ENCODE measurements at regions of chr2 and their contacts with region 1.

Region 1: GRCh38 chr2:231612179-231613053 is 19.8 kb downstream of the TEX44 start:
- DNase-seq: peak; percentile 91
- H3K4me3 ChIP-seq: peak overlapping the region; percentile 60
- H3K27ac ChIP-seq: peak overlapping the region; percentile 99
- H3K4me1 ChIP-seq: peaks cover 73% of the 10 kb centered on the region
- CTCF ChIP-seq: peak; percentile 98

Region 2: DNA sequence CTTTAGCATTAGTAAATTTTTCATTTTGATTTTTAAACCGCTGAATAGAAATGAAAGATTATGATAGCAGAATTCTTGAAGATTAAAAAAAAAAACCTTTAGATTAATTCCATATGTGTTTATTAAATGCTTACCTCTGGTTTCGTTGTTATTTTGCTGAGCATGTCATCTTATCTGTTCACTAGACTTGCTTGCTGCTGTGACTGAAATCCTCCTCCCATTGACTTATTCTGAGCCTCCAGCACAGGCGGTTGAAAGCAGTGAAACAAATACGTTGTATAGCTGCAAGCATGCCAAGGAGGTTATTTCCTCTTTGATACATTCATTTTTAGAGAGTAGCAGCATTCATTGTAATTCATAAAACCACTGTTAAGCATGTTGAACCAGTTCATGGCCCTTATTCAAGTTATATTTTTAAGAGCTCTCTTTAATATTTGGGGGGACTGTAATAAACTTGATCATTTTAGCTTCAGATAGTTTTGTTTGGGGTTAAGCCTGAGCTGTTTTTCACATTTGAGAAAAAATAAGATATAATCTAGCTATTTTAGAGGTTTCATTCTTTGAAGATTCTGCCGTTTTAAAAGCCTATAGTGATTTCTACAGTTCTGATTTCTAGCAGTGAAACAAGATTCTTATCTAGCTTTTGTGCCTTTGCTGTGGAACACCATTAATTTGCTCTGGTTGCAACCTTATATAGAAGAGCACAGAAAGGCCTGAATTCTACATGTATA is 487.4 kb before region 1 on chr2 and contains the start of gene HTR2B:
- CTCF ChIA-PET with region 1: no interaction called
- POLR2A ChIA-PET with region 1: no interaction called
- intact Hi-C with region 1: no loop called
- DNase-seq: no peak
- H3K4me3 ChIP-seq: no peak within 1 kb of the TSS
- H3K27ac ChIP-seq: no peak within 1 kb of the TSS
- H3K4me1 ChIP-seq: no peaks in the 10 kb centered on the region
- CTCF ChIP-seq: no peak
- total RNA-seq, gene HTR2B: not detected in 2 replicates

Region 3: GRCh38 chr2:231648587-231649174 is 36.3 kb after region 1 on chr2:
- CTCF ChIA-PET with region 1: no interaction called
- POLR2A ChIA-PET with region 1: interaction called, 4 read pairs
- intact Hi-C with region 1: loop called (anchors 1 kb)
- DNase-seq: peak; percentile 81
- H3K4me3 ChIP-seq: no peak overlapping the region
- H3K27ac ChIP-seq: no peak overlapping the region
- H3K4me1 ChIP-seq: peaks cover 26% of the 10 kb centered on the region
- CTCF ChIP-seq: peak; percentile 81

Region 4: DNA sequence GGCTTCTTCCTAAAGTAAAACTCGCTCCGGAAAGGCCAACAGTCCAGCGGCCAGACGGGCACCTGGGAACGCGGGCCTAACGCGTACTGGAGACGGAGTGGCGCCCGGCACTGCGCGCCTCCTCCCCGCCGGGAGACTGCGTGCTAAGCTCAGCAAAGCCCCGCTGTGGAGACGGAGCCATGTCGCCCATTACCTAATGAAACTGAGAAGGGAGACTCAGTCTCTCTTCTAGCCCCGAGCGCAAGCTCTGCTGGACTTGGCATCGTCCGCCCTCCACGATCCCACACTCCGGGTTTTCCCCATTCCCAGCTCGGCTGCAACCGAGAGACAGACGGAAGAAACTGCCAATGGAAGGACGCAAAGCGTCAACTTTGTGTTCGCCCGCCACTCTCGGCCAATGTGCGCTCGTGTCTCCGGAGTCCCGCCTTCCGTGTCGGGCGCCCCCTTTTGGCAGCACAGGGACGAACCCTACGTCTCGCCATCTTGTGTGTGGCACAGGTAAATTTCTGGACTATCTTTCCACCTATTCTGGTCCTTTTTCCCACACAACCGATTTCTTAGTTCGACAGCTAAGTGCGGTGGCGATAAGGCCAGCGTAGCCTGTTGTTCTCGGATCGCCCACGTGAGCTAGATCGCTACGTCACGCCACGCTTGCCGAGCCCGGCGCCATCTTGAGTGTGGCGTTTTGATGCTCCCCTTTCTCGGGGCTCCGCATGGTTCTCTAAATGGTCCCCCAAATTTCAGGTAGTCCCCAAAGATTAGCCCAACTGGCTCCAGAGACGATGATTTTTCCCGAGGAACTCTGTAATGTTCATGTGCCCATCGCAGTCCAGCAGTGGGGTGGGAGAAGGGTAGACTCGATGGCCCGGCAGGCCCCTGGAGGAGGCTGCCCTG is 94.6 kb after region 1 on chr2:
- CTCF ChIA-PET with region 1: no interaction called
- POLR2A ChIA-PET with region 1: interaction called, 8 read pairs
- intact Hi-C with region 1: loop called (anchors 1 kb)
- DNase-seq: peak; percentile 99
- H3K4me3 ChIP-seq: peak overlapping the region; percentile 93
- H3K27ac ChIP-seq: peak overlapping the region; percentile 95
- H3K4me1 ChIP-seq: peaks cover 29% of the 10 kb centered on the region
- CTCF ChIP-seq: peak; percentile 95

Region 5: GRCh38 chr2:231780909-231781797 is 168.7 kb after region 1 on chr2 and contains the start of gene PDE6D:
- CTCF ChIA-PET with region 1: no interaction called
- POLR2A ChIA-PET with region 1: interaction called, 7 read pairs
- intact Hi-C with region 1: loop called (anchors 1 kb)
- DNase-seq: peak; percentile 97
- H3K4me3 ChIP-seq: peak within 1 kb of the TSS; percentile 75
- H3K27ac ChIP-seq: peak within 1 kb of the TSS; percentile 39
- H3K4me1 ChIP-seq: peaks cover 40% of the 10 kb centered on the region
- CTCF ChIP-seq: no peak
- total RNA-seq, gene PDE6D: 47.4 and 50.3 TPM in 2 replicates

Region 6: GRCh38 chr2:231900486-231900942 is 288.1 kb after region 1 on chr2:
- CTCF ChIA-PET with region 1: interaction called, 3 read pairs
- POLR2A ChIA-PET with region 1: no interaction called
- intact Hi-C with region 1: loop called (anchors 5 kb)
- DNase-seq: peak; percentile 71
- H3K4me3 ChIP-seq: no peak overlapping the region
- H3K27ac ChIP-seq: no peak overlapping the region
- H3K4me1 ChIP-seq: no peaks in the 10 kb centered on the region
- CTCF ChIP-seq: peak; percentile 87

Region 7: GRCh38 chr2:232576995-232577394 is 964.6 kb after region 1 on chr2:
- CTCF ChIA-PET with region 1: no interaction called
- POLR2A ChIA-PET with region 1: no interaction called
- intact Hi-C with region 1: no loop called
- DNase-seq: no peak
- H3K4me3 ChIP-seq: no peak overlapping the region
- H3K27ac ChIP-seq: no peak overlapping the region
- H3K4me1 ChIP-seq: peaks cover 9% of the 10 kb centered on the region
- CTCF ChIP-seq: no peak

Measured in OCI-LY7 (cell line).